Stomach (tissue), 19 donors: ENCODE measurements at regions of chr16 and their contacts with region 1.

Region 1: DNA sequence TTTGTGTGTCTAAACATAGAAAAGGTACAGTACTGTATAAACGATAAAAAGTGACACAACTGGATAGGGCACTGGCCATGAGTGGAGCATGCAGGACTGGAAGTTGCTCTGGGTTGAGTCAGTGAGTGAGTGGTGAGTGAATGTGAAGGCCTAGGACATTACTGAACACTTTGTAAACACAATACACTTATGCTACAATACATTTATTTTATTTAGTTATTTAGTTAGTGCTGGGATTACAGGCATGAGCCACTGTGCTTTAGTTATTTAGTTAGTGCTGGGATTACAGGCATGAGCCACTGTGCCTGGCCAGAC is 4.6 kb downstream of the CFAP20 start:
- DNase-seq: no peak
- H3K4me3 ChIP-seq: no peak overlapping the region
- H3K27ac ChIP-seq: peak overlapping the region in 4 of 5 donors; percentile 27 to 63 (median 54)
- H3K4me1 ChIP-seq: peaks cover 51 to 88% (median 79%) of the 10 kb centered on the region in 4 donors
- H3K27me3 ChIP-seq: no peaks in the 10 kb centered on the region
- CTCF ChIP-seq: no peak
- EP300 ChIP-seq: no peak
- POLR2A ChIP-seq: no peak

Region 2: GRCh38 chr16:57802341-57803133 is 322.0 kb before region 1 on chr16 and contains the start of gene KIFC3:
- intact Hi-C with region 1: no loop called
- DNase-seq: peak; percentile 83 to 94
- H3K4me3 ChIP-seq: peak within 1 kb of the TSS; percentile 53 to 63 (median 58)
- H3K27ac ChIP-seq: peak within 1 kb of the TSS; percentile 39 to 89 (median 88)
- H3K4me1 ChIP-seq: peaks cover 55 to 84% (median 69%) of the 10 kb centered on the region in 4 donors
- H3K27me3 ChIP-seq: no peaks in the 10 kb centered on the region
- CTCF ChIP-seq: peak in 1 of 7 experiments; percentile 44
- EP300 ChIP-seq: no peak
- POLR2A ChIP-seq: no peak
- total RNA-seq, gene KIFC3: 2.3 to 249 (median 40.0) TPM

Region 3: DNA sequence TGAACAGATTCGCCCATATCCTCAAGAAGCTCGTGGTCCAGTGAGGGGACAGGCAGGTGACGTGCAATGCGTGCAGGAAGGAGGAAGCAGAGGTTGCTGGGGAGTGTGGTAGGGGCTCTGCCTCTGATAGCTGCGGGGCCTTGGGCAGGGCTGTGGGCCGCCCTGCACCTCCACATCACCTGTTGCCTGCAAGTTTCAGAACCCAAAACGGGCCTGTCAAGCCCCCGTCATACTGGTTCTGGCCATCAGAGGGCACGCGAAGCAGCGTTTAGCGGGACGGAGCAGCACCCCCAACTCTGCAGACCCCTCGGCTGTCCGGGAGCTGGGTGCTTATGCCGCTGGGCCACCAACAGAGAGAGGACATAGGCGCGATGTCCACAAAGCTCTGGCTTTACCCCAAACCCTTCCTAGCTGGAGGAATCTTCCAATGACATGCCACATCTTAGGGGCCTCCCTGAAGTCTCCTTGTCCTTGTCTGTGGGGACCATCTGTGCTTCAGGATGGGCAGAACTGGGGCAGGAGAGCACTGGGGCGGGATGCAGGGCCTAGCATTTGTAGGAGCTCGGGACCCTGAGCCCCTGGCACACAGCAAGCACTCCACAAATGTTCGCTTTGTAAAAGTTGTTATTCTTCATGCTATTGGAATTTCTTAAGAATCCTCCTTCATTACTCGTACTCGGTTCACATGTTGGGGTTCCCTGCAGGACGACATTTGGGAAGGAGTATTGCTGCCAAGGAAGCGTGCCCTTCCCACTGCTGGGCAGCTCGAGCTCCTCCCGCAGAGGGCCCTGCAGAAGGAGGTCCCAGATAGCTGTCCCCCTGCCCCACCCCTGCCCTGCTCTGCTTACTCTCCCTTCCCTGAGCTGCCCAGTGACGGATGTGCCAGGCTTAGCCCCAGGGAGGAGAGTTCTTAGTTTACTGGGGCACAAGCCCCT is 217.9 kb before region 1 on chr16:
- intact Hi-C with region 1: no loop called
- DNase-seq: peak in 1 of 2 donors; percentile 43
- H3K4me3 ChIP-seq: no peak overlapping the region
- H3K27ac ChIP-seq: no peak overlapping the region
- H3K4me1 ChIP-seq: peaks cover 0 to 7% (median 0%) of the 10 kb centered on the region in 4 donors
- H3K27me3 ChIP-seq: peaks cover 0 to 49% (median 0%) of the 10 kb centered on the region in 3 donors
- CTCF ChIP-seq: peak in 4 of 7 experiments; percentile 11 to 45 (median 26)
- EP300 ChIP-seq: no peak
- POLR2A ChIP-seq: no peak

Region 4: DNA sequence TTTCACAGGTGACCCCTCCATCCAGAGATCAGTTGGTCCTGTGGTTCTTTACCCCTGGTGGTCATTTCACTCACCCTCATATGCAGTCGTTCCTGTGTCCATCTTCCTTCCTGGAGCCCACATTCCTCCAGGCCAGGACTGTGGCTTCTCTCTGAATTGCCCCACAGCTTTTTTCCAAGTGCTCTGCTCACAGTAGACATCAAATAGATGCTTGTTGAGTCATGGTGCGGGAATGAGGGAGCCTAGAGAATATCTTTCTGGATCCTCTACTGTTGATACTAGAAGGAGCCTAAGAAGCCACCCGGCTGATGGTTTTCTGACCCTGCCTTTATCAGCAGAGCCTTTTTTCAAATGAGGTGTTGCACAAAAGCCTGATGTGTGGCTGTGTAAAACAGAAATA is 112.9 kb before region 1 on chr16:
- intact Hi-C with region 1: loop called (anchors 5 kb)
- DNase-seq: no peak
- H3K4me3 ChIP-seq: no peak overlapping the region
- H3K27ac ChIP-seq: no peak overlapping the region
- H3K4me1 ChIP-seq: no peaks in the 10 kb centered on the region
- H3K27me3 ChIP-seq: no peaks in the 10 kb centered on the region
- CTCF ChIP-seq: no peak
- EP300 ChIP-seq: no peak
- POLR2A ChIP-seq: no peak

Region 5: GRCh38 chr16:58471321-58471975 is 346.9 kb after region 1 on chr16:
- intact Hi-C with region 1: no loop called
- DNase-seq: no peak
- H3K4me3 ChIP-seq: no peak overlapping the region
- H3K27ac ChIP-seq: no peak overlapping the region
- H3K4me1 ChIP-seq: no peaks in the 10 kb centered on the region
- H3K27me3 ChIP-seq: peaks cover 4 to 60% (median 27%) of the 10 kb centered on the region in 3 donors
- CTCF ChIP-seq: no peak
- EP300 ChIP-seq: no peak
- POLR2A ChIP-seq: no peak